Gastrocnemius medialis (tissue), 4 donors: ENCODE measurements at regions of chr12 and their contacts with region 1.

Region 1: DNA sequence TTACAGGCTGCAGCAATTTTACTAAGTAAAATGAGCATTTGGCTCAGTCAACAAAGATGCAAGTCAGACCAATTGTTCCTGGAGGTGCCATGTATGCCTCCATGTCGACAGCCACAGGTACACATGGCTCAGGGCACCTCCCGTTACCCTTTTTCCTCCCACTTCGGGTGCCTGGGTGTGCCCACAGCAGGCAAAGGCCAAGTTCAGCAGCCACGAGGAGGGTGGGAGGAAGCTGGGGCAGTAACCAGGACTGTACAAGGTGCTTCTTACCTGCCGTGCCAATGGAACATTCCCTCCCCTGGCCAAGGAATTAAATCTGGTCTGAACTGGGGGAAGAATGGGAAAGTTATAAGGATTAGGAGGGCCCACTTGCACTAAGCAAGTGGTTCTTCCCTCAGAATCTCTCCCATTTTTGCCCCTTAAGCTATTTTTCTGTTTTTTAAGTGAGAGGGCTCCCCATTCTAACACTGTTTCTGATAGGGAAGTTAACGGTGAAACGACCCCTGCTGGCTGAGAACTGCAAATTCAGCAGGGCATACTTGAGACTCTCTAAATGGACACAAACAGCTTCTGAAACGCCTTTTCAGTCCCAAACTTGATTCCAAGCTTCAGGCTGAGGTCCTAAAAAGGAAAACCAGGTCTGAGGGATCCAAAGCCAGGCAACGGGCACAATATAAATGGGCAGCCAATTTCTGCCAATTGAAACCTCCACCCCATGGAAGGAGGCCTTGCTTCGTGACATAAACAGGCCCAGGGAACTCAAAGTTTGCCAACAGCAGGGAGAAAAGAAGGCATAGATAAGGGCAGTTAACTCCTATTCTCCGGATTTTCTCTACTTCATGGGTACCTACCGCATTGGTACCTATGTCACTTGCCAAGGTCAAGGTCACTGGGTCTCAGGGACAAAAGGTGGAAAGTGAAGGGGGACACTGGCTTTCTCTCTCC is 24.8 kb downstream of the CLECL1 start:
- DNase-seq: no peak
- ATAC-seq: no peak
- H3K4me3 ChIP-seq: no peak overlapping the region
- H3K27ac ChIP-seq: no peak overlapping the region
- H3K4me1 ChIP-seq: no peaks in the 10 kb centered on the region
- H3K27me3 ChIP-seq: no peaks in the 10 kb centered on the region
- CTCF ChIP-seq: peak; percentile 43 to 66 (median 47)
- POLR2A ChIP-seq: no peak

Region 2: GRCh38 chr12:9331218-9331626 is 376.9 kb before region 1 on chr12:
- in situ Hi-C with region 1: loop called in 2 of 4 experiments (anchors 25 kb)
- intact Hi-C with region 1: loop called (anchors 5 kb)
- DNase-seq: no peak
- ATAC-seq: no peak
- H3K4me3 ChIP-seq: no peak overlapping the region
- H3K27ac ChIP-seq: no peak overlapping the region
- H3K4me1 ChIP-seq: peaks cover 0 to 2% of the 10 kb centered on the region in 2 donors
- H3K27me3 ChIP-seq: no peaks in the 10 kb centered on the region
- CTCF ChIP-seq: peak; percentile 49 to 86 (median 69)
- POLR2A ChIP-seq: no peak

Region 3: DNA sequence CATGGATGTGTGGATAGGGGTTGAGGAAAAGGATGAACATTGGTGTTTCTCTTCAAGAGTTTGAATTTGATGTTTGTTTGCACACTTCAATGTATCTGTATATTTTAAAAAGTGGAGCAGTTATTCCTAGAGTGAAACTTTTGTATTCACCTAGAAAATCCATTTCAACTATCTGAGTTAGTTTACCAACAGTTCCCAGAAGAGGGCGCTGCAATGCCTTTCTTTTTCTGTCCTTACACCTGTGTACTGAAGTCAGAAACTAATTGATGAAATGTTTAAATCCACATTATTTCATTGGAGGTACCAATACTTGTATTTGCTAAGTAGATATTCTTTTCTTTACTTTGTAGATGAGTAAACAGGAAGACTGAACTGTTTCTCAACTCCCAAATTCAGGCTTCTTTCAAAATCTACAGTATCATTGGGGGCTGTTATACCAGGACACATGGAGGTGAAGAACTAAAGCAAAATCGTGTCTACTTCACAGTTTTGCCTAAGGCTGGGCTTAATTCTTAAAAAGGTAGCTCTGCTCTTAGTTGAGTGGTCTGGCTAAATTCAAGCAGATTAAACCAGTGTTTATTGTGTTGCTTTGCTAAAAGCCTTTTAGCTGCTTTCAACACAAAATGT is 73.8 kb before region 1 on chr12:
- in situ Hi-C with region 1: loop called in 3 of 4 experiments (anchors 10 kb)
- intact Hi-C with region 1: loop called (anchors 2 kb)
- DNase-seq: no peak
- ATAC-seq: no peak
- H3K4me3 ChIP-seq: no peak overlapping the region
- H3K27ac ChIP-seq: no peak overlapping the region
- H3K4me1 ChIP-seq: no peaks in the 10 kb centered on the region
- H3K27me3 ChIP-seq: no peaks in the 10 kb centered on the region
- CTCF ChIP-seq: peak in 4 of 5 experiments; percentile 17 to 57 (median 38)
- POLR2A ChIP-seq: no peak